CD8-positive, alpha-beta memory T cell (primary cell): ENCODE measurements at regions of chr9 and their contacts with region 1.

Region 1: DNA sequence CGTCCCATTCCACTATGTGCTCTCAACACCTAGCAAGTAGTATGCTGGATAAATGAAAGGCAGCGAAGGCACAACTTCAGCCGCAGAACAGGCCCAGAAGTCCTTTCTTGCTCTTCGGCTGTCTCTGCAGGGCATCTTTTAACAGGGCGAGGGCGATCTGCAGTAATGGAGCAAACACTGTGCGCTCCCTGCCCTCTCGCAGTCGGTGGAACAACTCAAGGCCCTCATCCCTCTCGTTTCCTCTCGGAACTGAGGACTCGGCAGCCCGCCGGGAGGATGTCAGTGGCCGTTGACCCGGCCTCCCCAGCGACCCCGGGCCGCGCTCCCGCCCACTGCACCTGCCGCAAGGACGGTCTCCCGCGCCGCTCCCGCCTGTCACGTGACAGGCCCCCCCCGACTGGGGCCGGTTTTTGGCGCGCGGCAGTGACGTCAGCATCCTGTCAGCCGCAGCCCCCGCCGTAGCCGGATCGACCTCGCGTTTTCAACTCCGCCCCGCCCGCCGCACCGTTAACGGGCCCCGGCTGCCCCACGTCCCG is 1.1 kb downstream of the ZNF367 start:
- DNase-seq: peak; percentile 86 to 94 (median 90)
- H3K4me3 ChIP-seq: peak overlapping the region; percentile 75
- H3K4me3 Mint-ChIP-seq: peak overlapping the region; percentile 89 to 95 (median 91)
- H3K27ac ChIP-seq: peak overlapping the region; percentile 90
- H3K27ac Mint-ChIP-seq: peak overlapping the region; percentile 92 to 99 (median 96)
- H3K4me1 ChIP-seq: peaks cover 43% of the 10 kb centered on the region
- H3K4me1 Mint-ChIP-seq: peaks cover 42 to 48% (median 47%) of the 10 kb centered on the region in 3 donors
- H3K27me3 ChIP-seq: no peaks in the 10 kb centered on the region
- H3K27me3 Mint-ChIP-seq: no peaks in the 10 kb centered on the region

Region 2: DNA sequence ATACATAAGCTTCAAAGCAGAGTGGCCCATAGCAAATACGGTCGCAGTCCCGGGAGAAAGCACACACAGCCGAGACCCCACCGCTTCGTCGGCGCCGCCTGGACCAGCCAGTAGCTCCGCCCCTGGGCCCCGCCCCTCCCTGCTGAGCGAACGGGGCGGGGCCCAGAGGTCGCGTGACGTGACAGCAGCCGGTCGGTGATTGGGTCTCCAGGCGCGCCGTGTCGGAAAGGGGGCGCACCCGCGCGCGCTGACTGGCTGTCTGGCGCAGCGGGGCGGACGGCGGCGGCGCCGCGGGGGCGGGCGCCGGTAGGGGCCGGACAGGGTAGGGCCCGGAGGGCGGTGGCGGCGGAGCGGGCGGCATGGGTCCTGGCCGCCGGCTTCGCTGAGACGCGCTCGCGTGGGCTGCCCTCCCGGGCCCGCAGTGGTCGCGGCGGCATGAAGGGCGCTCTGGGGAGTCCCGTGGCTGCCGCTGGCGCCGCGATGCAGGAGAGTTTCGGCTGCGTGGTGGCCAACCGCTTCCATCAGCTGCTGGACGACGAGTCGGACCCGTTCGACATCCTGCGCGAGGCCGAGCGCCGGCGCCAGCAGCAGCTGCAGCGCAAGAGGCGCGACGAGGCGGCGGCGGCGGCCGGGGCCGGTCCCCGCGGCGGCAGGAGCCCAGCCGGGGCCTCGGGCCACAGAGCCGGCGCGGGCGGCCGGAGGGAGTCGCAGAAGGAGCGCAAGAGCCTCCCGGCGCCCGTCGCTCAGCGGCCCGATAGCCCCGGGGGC is 32.9 kb after region 1 on chr9 and contains the start of gene HABP4:
- CTCF ChIA-PET with region 1: interaction called, 4 read pairs
- POLR2A ChIA-PET with region 1: interaction called, 12 read pairs
- DNase-seq: peak; percentile 94 to 97 (median 95)
- H3K4me3 ChIP-seq: peak within 1 kb of the TSS; percentile 75
- H3K4me3 Mint-ChIP-seq: peak within 1 kb of the TSS; percentile 89 to 96 (median 94)
- H3K27ac ChIP-seq: peak within 1 kb of the TSS; percentile 57
- H3K27ac Mint-ChIP-seq: peak within 1 kb of the TSS; percentile 60 to 95 (median 90)
- H3K4me1 ChIP-seq: peaks cover 18% of the 10 kb centered on the region
- H3K4me1 Mint-ChIP-seq: peaks cover 19 to 29% (median 28%) of the 10 kb centered on the region in 3 donors
- H3K27me3 ChIP-seq: no peaks in the 10 kb centered on the region
- H3K27me3 Mint-ChIP-seq: peaks cover 0 to 1% of the 10 kb centered on the region in 2 donors
- total RNA-seq, gene HABP4: 20.4 to 21.0 TPM

Region 3: GRCh38 chr9:96478829-96479371 is 61.8 kb after region 1 on chr9:
- CTCF ChIA-PET with region 1: no interaction called
- POLR2A ChIA-PET with region 1: no interaction called
- DNase-seq: no peak
- H3K4me3 ChIP-seq: no peak overlapping the region
- H3K4me3 Mint-ChIP-seq: no peak overlapping the region
- H3K27ac ChIP-seq: no peak overlapping the region
- H3K27ac Mint-ChIP-seq: peak overlapping the region in 4 of 8 donors; percentile 17 to 81 (median 44)
- H3K4me1 ChIP-seq: no peaks in the 10 kb centered on the region
- H3K4me1 Mint-ChIP-seq: peaks cover 8 to 37% (median 28%) of the 10 kb centered on the region in 3 donors
- H3K27me3 ChIP-seq: no peaks in the 10 kb centered on the region
- H3K27me3 Mint-ChIP-seq: no peaks in the 10 kb centered on the region